ENCODE measurements at regions of chr1 and their contacts with region 1.

Region 1: DNA sequence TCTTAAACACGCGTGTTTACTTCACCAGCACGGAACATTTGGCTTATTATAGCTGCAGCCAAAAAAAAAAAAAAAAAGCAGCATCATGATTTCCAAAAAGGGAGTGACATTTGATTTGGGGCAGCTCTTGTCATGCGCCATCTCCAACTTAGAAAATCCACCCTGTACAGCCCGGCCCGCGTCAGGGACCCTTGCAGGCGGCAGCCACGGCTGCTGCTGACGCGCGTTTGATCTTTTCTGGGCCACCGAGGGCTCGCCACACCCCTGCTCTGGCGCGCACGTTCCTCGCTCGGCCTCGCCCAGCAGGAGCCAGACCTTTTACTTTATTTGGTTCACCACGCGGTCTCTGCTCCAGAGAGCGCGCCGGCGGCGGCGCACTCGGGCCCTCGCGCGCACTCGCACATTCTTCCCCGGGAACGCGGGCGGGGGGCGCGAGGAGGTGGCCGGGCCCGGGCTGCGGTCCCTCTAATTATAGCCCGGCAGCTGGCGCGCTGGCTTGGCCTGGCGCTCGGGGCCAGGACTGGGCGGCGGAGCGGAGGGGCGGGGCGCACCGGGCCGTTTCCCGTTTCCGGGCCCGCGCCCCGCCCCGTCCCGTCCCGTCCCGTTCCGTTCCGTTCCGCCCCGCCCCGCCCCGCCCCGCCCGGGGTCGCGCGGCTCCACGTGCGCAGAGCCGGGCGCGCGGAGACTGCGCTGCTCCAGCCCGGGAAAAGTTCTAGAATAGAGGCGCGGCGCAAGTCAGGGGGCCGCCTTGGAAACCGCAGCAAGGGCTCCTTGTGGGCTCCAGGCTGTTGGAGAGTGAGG is 10.2 kb downstream of the IRF2BP2 start:
- DNase-seq: peak; percentile 86
- ATAC-seq: peak; percentile 73
- H3K4me3 Mint-ChIP-seq: peak overlapping the region; percentile 97
- H3K27ac Mint-ChIP-seq: peak overlapping the region; percentile 91
- H3K4me1 Mint-ChIP-seq: peaks cover 49% of the 10 kb centered on the region
- H3K27me3 Mint-ChIP-seq: no peaks in the 10 kb centered on the region

Region 2: GRCh38 chr1:234478481-234479309 is 121.1 kb before region 1 on chr1 and contains the start of gene TARBP1:
- CTCF ChIA-PET with region 1: no interaction called
- POLR2A ChIA-PET with region 1: no interaction called
- intact Hi-C with region 1: loop called in 1 of 2 experiments (anchors 1 kb)
- DNase-seq: peak; percentile 86
- ATAC-seq: peak; percentile 81
- H3K4me3 Mint-ChIP-seq: peak within 1 kb of the TSS; percentile 82
- H3K27ac Mint-ChIP-seq: peak within 1 kb of the TSS; percentile 80
- H3K4me1 Mint-ChIP-seq: peaks cover 56% of the 10 kb centered on the region
- H3K27me3 Mint-ChIP-seq: peaks cover 16% of the 10 kb centered on the region
- total RNA-seq, gene TARBP1: 37.7 to 41.5 TPM